IMR-90 (cell line): ENCODE measurements at regions of chr9 and their contacts with region 1.

Region 1: GRCh38 chr9:73609381-73609780 is 457.7 kb downstream of the ANXA1 start:
- DNase-seq: no peak
- ATAC-seq: no peak
- H3K4me3 ChIP-seq: no peak overlapping the region
- H3K27ac ChIP-seq: no peak overlapping the region
- H3K4me1 ChIP-seq: no peaks in the 10 kb centered on the region
- H3K27me3 ChIP-seq: no peaks in the 10 kb centered on the region
- CTCF ChIP-seq: no peak
- POLR2A ChIP-seq: no peak
- RAD21 ChIP-seq: no peak

Region 2: DNA sequence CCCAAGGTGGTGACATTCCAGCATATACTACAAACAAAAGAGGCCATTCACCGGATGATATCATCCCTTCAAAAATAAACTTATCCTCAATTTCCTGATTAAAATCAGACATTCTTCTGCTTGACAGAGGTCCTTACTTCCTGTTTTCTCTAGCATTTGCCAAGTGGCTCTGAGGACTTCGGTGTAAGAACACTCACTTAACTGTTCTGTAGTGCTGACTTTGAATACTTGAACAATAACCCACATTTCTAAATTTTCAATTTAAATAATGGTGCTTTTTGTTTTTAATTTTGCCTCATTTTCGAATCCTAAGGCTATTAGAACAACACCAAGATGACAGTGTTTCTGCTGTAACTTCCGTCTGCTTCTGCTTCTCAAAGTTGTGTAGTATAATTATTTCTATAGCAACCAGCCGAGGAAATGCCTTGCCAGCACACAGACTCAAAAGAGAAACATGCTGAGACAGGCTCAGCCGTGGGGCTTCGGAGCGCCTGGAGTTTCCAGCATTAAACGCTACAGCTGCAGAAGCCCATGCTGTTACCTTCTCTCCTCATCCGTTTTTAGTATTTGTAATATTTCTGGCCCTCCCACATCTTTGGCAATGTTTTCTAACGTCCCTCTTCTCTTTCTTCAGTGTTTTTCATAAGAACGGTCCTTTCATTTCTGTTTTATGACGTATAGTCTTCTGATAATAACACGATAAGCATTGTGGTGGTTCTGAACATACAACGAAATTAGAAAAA is 477.2 kb before region 1 on chr9:
- CTCF ChIA-PET with region 1: no interaction called
- POLR2A ChIA-PET with region 1: no interaction called
- dilution Hi-C with region 1: no loop called
- in situ Hi-C with region 1: no loop called
- intact Hi-C with region 1: no loop called
- DNase-seq: peak; percentile 85
- ATAC-seq: peak; percentile 94
- H3K4me3 ChIP-seq: peak overlapping the region; percentile 86
- H3K27ac ChIP-seq: peak overlapping the region; percentile 30
- H3K4me1 ChIP-seq: peaks cover 4% of the 10 kb centered on the region; the same call in 1 of the 2 replicates
- H3K27me3 ChIP-seq: no peaks in the 10 kb centered on the region
- CTCF ChIP-seq: no peak
- POLR2A ChIP-seq: peak; percentile 78
- RAD21 ChIP-seq: no peak

Region 3: GRCh38 chr9:73348471-73348870 is 260.9 kb before region 1 on chr9:
- CTCF ChIA-PET with region 1: no interaction called
- POLR2A ChIA-PET with region 1: no interaction called
- dilution Hi-C with region 1: no loop called
- in situ Hi-C with region 1: no loop called
- intact Hi-C with region 1: no loop called
- DNase-seq: no peak
- ATAC-seq: no peak
- H3K4me3 ChIP-seq: no peak overlapping the region
- H3K27ac ChIP-seq: no peak overlapping the region
- H3K4me1 ChIP-seq: no peaks in the 10 kb centered on the region
- H3K27me3 ChIP-seq: no peaks in the 10 kb centered on the region
- CTCF ChIP-seq: no peak
- POLR2A ChIP-seq: no peak
- RAD21 ChIP-seq: no peak

Region 4: DNA sequence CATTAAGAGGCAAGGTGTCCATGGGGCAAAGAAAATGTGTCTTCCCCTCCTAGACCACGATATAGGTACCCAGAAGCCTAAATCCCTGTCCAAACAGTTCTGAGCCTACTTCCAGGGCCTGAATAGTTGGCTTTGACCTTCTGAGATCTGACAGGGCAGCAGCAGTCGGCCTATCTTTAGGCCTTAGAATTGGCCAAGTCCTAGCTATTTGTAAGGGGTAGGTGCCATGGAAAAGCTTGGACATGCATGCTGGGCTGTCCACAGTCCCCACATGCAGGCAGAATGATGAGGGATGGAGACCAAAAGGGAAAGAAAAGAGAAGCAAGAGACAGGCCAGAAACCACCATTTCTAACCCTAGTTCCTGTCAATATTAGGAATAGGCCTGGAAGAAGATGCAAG is 111.6 kb before region 1 on chr9:
- CTCF ChIA-PET with region 1: no interaction called
- POLR2A ChIA-PET with region 1: no interaction called
- dilution Hi-C with region 1: no loop called
- in situ Hi-C with region 1: no loop called
- intact Hi-C with region 1: no loop called
- DNase-seq: no peak
- ATAC-seq: no peak
- H3K4me3 ChIP-seq: no peak overlapping the region
- H3K27ac ChIP-seq: no peak overlapping the region
- H3K4me1 ChIP-seq: no peaks in the 10 kb centered on the region
- H3K27me3 ChIP-seq: no peaks in the 10 kb centered on the region
- CTCF ChIP-seq: no peak
- POLR2A ChIP-seq: no peak
- RAD21 ChIP-seq: no peak

Region 5: DNA sequence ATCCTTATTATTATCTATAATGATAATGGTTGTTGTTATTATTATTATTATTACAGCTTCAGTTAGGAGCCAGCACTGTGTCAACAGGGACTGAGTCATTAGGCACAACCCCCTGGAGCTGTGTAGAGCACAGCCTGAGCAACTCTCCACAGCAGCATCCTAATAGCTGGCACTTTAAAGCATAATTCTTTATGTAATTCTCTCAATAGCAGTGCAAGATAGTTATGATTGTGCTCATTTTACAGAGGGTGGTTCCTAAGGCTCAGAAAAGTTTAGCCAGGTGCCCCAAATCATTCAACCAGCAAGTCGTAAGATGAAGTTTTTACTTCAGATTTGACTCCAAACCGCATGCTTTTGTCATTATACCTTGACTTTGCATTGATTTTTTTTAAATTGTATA is 67.5 kb before region 1 on chr9:
- CTCF ChIA-PET with region 1: no interaction called
- POLR2A ChIA-PET with region 1: no interaction called
- dilution Hi-C with region 1: no loop called
- in situ Hi-C with region 1: no loop called
- intact Hi-C with region 1: no loop called
- DNase-seq: no peak
- ATAC-seq: no peak
- H3K4me3 ChIP-seq: no peak overlapping the region
- H3K27ac ChIP-seq: no peak overlapping the region
- H3K4me1 ChIP-seq: no peaks in the 10 kb centered on the region
- H3K27me3 ChIP-seq: no peaks in the 10 kb centered on the region
- CTCF ChIP-seq: no peak
- POLR2A ChIP-seq: no peak
- RAD21 ChIP-seq: no peak

Region 6: DNA sequence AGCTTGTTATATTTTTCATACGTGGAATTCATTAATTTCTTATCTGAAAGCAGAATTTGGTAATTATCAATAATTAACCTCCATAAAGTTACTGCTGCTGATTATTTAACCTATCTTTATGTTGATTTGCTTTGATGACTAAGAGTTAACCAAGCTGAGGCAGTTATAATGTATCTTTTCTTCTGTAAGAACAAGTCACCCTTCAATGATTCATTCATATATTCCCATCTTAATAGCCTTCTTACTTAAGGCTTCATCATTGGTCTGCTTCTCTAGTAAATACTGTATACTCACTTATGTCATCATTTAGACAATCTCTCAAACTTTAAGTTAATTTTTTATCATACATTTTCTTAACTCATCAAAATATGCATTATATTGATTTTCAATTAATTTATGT is 134.4 kb after region 1 on chr9:
- CTCF ChIA-PET with region 1: interaction called, 10 read pairs
- POLR2A ChIA-PET with region 1: no interaction called
- dilution Hi-C with region 1: no loop called
- in situ Hi-C with region 1: no loop called
- intact Hi-C with region 1: no loop called
- DNase-seq: no peak
- ATAC-seq: no peak
- H3K4me3 ChIP-seq: no peak overlapping the region
- H3K27ac ChIP-seq: no peak overlapping the region
- H3K4me1 ChIP-seq: no peaks in the 10 kb centered on the region
- H3K27me3 ChIP-seq: no peaks in the 10 kb centered on the region
- CTCF ChIP-seq: no peak
- POLR2A ChIP-seq: no peak
- RAD21 ChIP-seq: no peak